Mucosa of descending colon (tissue), 3 donors: ENCODE measurements at regions of chr3 and their contacts with region 1.

Region 1: DNA sequence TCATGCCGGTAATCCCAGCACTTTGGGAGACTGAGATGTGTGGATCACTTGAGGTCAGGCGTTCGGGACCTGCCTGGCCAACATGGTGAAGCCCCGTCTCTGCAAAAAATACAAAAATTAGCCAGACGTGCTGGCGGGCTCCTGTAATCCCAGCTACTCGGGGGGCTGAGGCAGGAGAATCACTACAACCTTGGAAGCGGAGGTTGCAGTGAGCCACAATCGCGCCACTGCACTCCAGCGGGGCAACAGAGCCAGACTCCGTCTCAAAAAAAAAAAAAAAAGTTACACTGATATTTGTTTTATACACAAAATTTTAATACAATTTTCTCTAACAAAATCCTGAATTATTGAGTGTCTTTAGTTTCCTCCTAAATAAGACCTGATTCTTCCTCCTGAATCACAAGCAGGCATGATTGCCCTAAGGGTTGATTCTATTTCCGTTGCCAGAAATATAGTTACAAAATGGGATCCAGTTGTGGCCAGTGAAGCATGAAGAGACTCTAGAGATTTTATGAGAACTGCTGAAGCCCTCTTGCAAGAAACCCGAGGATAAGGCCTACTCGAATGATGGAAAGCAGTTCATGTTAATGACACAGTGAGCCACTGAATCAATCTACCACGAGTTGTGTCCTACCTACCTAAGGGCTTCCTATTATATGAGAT is 9.6 kb upstream of the SMARCC1 start:
- DNase-seq: no peak
- ATAC-seq: no peak
- H3K4me3 ChIP-seq: no peak overlapping the region
- H3K4me1 ChIP-seq: no peaks in the 10 kb centered on the region
- CTCF ChIP-seq: no peak

Region 2: DNA sequence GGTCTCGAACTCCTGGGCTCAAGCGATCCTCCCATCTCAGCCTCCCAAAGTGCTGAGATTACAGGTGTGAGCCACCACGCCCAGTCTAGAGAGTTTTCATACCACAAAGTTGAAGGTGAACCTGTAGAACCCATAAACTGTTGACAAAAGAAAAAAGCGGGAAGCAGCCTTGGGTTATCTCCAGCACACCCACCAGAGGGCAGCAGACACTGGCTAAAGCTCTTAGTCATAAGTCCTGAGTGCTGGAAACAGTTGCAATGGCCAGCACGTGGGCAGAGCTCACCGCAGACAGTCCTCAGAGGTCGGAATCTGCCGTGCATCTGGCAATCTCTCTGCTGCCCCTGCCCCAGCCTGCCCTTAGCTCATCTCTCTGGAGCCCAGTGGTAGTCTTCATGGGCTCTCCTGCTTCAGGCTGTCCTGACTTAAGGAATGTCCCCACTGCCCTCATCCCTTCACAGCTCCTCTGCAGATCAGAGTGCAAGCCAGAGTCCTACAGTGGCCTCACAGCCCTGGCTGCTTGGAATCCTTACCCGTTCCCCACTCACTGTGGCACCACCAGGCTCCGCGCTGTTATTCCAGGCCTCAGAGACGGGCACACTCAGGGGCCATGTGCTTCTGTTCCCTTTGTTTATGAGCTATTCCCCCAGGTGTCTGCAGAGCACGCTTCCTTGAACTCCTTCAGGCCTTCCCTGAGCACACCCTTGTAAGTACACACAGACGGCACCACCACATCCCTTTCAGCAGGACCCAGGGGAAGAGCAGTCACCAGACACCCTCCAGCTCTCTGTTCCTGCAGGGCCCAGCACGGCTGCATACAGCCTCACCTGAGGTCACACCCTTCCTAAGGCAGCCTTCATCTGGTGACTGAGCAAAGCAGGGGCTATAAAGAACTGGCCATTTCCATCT is 269.0 kb before region 1 on chr3:
- intact Hi-C with region 1: loop called (anchors 1 to 5 kb)
- DNase-seq: peak; percentile 74 to 90 (median 83)
- ATAC-seq: peak; percentile 99
- H3K4me3 ChIP-seq: no peak overlapping the region
- H3K4me1 ChIP-seq: peaks cover 4% of the 10 kb centered on the region
- CTCF ChIP-seq: peak; percentile 80

Region 3: DNA sequence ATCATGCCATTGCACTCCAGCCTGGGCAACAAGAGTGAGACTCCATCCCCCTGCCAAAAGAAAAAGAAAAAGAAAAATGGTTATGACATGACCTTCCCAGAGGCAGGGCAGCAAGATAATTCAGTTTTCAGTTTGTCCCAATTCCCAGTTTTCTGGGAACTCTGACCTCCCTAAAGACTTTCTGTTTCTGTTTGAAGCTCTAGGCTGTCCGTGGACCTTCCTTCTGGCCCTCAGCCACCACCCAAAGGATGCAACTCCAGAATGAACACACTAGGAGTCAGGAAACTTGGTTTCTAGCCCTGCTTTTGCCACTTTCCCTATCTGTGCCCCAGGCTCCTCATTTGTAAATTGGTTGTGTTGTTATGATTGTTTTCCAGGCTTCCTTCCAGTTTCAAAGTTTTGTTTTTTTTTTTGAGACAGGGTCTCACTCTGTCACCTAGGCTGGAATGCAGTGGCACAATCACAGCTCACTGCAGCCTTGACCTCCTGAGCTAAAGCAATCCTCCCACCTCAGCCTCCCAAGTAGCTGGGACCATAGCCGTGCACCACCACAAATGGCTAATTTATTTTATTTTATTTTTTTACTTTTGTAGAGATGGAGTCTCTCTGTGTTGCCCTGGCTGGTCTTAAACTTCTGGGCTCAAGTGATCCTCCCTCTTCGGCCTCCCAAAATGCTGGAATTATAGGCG is 328.3 kb after region 1 on chr3:
- intact Hi-C with region 1: no loop called
- DNase-seq: peak in 2 of 3 donors; percentile 29 to 39
- ATAC-seq: peak; percentile 39
- H3K4me3 ChIP-seq: no peak overlapping the region
- H3K4me1 ChIP-seq: no peaks in the 10 kb centered on the region
- CTCF ChIP-seq: no peak

Region 4: GRCh38 chr3:48528754-48529153 is 737.4 kb after region 1 on chr3:
- intact Hi-C with region 1: no loop called
- DNase-seq: no peak
- ATAC-seq: no peak
- H3K4me3 ChIP-seq: no peak overlapping the region
- H3K4me1 ChIP-seq: no peaks in the 10 kb centered on the region
- CTCF ChIP-seq: no peak